Lower leg skin (tissue), 4 donors: ENCODE measurements at regions of chr4 and their contacts with region 1.

Region 1: GRCh38 chr4:25299480-25300188 is 12.9 kb upstream of the ZCCHC4 start:
- DNase-seq: peak in 1 of 2 donors; percentile 25
- H3K4me3 ChIP-seq: no peak overlapping the region
- CTCF ChIP-seq: no peak
- POLR2A ChIP-seq: no peak

Region 2: GRCh38 chr4:25234390-25235370 is 65.0 kb before region 1 on chr4:
- intact Hi-C with region 1: loop called (anchors 10 kb)
- DNase-seq: peak; percentile 23 to 90
- H3K4me3 ChIP-seq: peak overlapping the region; percentile 87
- CTCF ChIP-seq: no peak
- POLR2A ChIP-seq: no peak

Region 3: DNA sequence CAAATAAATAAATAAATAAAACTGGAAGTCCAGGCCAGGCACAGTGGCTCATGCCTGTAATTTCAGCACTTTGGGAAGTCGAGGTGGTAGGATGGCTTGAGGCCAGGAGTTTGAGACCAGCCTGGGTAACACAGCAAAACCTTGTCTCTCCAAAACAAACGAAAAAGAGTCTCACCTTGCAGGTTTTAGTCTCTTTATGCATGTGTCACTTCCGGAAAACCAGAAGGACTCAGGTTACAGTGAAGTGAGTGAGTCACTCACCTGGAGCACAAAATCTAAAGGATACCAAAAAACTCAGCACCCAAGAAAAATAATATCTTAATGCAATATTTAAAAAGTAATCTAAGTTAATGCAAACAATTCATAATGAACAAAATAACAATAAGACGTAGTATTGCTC is 335.9 kb after region 1 on chr4:
- intact Hi-C with region 1: no loop called
- DNase-seq: no peak
- H3K4me3 ChIP-seq: no peak overlapping the region
- CTCF ChIP-seq: no peak
- POLR2A ChIP-seq: no peak